Caco-2 (cell line): ENCODE measurements at regions of chr16 and their contacts with region 1.

Region 1: DNA sequence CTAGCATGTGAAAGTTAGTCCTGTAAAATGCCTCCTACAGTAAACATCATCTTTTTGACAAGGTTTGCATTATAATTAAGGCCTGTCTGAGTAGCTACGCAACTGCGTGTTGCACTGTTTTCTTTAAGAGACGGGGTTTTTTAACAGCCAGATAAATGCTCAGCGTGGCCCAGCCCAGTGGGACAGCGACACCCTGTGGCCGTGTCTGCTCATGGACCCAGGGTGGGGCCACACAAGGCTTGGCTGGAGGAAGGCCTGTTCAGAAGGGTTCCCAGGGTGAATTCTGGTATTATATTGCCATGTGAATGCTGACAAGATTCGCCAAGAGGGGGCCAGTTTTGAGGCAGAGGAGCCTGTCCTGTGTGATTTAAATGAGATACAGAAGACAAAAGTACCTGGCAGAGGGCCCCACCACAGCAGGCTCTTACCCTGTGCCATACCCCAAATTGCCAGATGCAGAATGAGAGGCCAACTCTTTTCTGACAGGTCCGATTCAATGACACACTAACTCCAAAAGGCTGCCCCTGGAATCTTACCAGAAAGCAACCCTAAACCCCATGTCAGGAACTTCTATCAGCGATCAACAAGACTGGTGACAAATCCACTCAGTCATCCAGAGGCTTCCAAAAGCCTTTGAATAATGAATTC is 65.9 kb upstream of the IRX6 start:
- DNase-seq: peak; percentile 65 to 86
- H3K4me3 ChIP-seq: no peak overlapping the region
- H3K4me3 Mint-ChIP-seq: no peak overlapping the region
- H3K27ac Mint-ChIP-seq: no peak overlapping the region
- H3K4me1 ChIP-seq: no peaks in the 10 kb centered on the region
- H3K4me1 Mint-ChIP-seq: peaks cover 6% of the 10 kb centered on the region
- H3K27me3 ChIP-seq: no peaks in the 10 kb centered on the region
- H3K27me3 Mint-ChIP-seq: no peaks in the 10 kb centered on the region
- CTCF ChIP-seq: peak; percentile 86 to 93

Region 2: DNA sequence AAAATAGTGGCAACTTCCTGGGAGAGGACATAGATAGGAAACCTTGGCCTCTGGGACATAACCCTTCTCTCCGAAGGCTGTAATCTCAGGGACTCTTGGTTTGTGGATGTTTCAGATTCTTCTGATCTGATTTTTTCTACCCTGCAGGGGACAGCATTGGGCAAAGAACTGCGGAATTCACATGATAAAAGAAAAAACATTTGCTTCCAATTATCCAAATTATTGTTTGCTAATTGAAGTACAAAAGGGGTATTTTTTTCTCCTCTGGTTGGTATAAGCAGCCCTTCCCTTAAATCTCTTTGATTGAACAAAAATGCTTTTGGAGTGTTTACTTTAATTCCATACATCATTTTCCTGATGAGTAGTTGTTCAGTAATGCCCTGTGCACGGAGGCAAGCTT is 719.8 kb before region 1 on chr16:
- CTCF ChIA-PET with region 1: no interaction called
- POLR2A ChIA-PET with region 1: no interaction called
- intact Hi-C with region 1: loop called (anchors 5 kb)
- DNase-seq: peak in 1 of 2 experiments; percentile 31
- H3K4me3 ChIP-seq: no peak overlapping the region
- H3K4me3 Mint-ChIP-seq: no peak overlapping the region
- H3K27ac Mint-ChIP-seq: no peak overlapping the region
- H3K4me1 ChIP-seq: peaks cover 23% of the 10 kb centered on the region
- H3K4me1 Mint-ChIP-seq: peaks cover 8% of the 10 kb centered on the region
- H3K27me3 ChIP-seq: no peaks in the 10 kb centered on the region
- H3K27me3 Mint-ChIP-seq: no peaks in the 10 kb centered on the region
- CTCF ChIP-seq: peak; percentile 41 to 61

Region 3: DNA sequence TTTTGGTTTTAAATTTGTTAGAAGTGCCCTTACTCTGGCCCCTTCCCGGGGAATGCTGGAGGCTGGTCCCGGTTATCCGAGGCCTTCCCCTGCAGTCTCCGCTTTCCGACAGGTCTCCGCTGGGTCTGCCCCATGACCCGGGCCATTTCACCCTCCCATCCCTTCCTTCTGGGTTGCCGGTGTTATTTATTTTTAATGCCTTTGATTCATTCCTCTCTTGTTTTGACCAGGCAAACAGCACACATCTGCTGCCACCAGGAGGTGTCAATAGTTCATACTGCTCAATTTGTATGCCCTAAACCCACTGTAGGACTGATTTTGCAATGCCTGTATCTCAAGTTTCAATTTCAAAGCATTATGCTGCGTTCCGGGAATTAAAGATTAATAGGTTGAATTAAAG is 440.6 kb before region 1 on chr16:
- CTCF ChIA-PET with region 1: no interaction called
- POLR2A ChIA-PET with region 1: no interaction called
- intact Hi-C with region 1: loop called (anchors 5 kb)
- DNase-seq: peak in 1 of 2 experiments; percentile 35
- H3K4me3 ChIP-seq: no peak overlapping the region
- H3K4me3 Mint-ChIP-seq: no peak overlapping the region
- H3K27ac Mint-ChIP-seq: peak overlapping the region; percentile 82
- H3K4me1 ChIP-seq: peaks cover 20% of the 10 kb centered on the region
- H3K4me1 Mint-ChIP-seq: peaks cover 23% of the 10 kb centered on the region
- H3K27me3 ChIP-seq: no peaks in the 10 kb centered on the region
- H3K27me3 Mint-ChIP-seq: no peaks in the 10 kb centered on the region
- CTCF ChIP-seq: peak; percentile 38 to 72

Region 4: GRCh38 chr16:54957403-54958171 is 300.5 kb before region 1 on chr16:
- CTCF ChIA-PET with region 1: interaction called, 4 read pairs
- POLR2A ChIA-PET with region 1: no interaction called
- intact Hi-C with region 1: loop called (anchors 2 kb)
- DNase-seq: peak in 1 of 2 experiments; percentile 73
- H3K4me3 ChIP-seq: no peak overlapping the region
- H3K4me3 Mint-ChIP-seq: no peak overlapping the region
- H3K27ac Mint-ChIP-seq: no peak overlapping the region
- H3K4me1 ChIP-seq: no peaks in the 10 kb centered on the region
- H3K4me1 Mint-ChIP-seq: no peaks in the 10 kb centered on the region
- H3K27me3 ChIP-seq: no peaks in the 10 kb centered on the region
- H3K27me3 Mint-ChIP-seq: no peaks in the 10 kb centered on the region
- CTCF ChIP-seq: peak; percentile 62 to 77

Region 5: GRCh38 chr16:55035029-55035428 is 223.1 kb before region 1 on chr16:
- CTCF ChIA-PET with region 1: interaction called, 8 read pairs
- POLR2A ChIA-PET with region 1: no interaction called
- intact Hi-C with region 1: loop called (anchors 1 kb)
- DNase-seq: peak; percentile 69 to 75
- H3K4me3 ChIP-seq: no peak overlapping the region
- H3K4me3 Mint-ChIP-seq: no peak overlapping the region
- H3K27ac Mint-ChIP-seq: no peak overlapping the region
- H3K4me1 ChIP-seq: 0 out of 2 replicates have a peak, but pooled peaks cover 6% of the 10 kb centered on the region
- H3K4me1 Mint-ChIP-seq: no peaks in the 10 kb centered on the region
- H3K27me3 ChIP-seq: no peaks in the 10 kb centered on the region
- H3K27me3 Mint-ChIP-seq: no peaks in the 10 kb centered on the region
- CTCF ChIP-seq: peak; percentile 62 to 72

Region 6: GRCh38 chr16:55091213-55091870 is 166.7 kb before region 1 on chr16:
- CTCF ChIA-PET with region 1: no interaction called
- POLR2A ChIA-PET with region 1: no interaction called
- intact Hi-C with region 1: no loop called
- DNase-seq: no peak
- H3K4me3 ChIP-seq: no peak overlapping the region
- H3K4me3 Mint-ChIP-seq: no peak overlapping the region
- H3K27ac Mint-ChIP-seq: no peak overlapping the region
- H3K4me1 ChIP-seq: no peaks in the 10 kb centered on the region
- H3K4me1 Mint-ChIP-seq: no peaks in the 10 kb centered on the region
- H3K27me3 ChIP-seq: no peaks in the 10 kb centered on the region
- H3K27me3 Mint-ChIP-seq: no peaks in the 10 kb centered on the region
- CTCF ChIP-seq: no peak

Region 7: DNA sequence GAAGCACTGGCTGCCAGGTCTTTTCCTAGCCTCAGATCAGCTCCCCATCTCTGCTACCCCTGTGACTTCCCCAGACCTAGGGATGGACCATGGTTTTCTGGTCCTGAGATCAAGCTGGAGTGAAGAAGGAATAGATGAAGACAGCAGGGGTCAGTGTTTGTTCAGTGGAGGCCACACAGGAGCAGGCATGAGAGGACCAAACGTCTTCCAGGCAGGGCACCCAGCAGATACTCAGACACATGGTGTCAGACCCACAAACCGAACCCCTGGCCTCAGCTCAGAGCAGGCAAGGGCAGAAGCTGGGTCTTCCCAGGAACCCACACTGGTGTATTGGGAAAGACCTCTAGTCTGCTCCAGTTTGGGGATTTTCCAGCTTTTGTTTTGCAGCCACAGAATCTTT is 137.7 kb before region 1 on chr16:
- CTCF ChIA-PET with region 1: no interaction called
- POLR2A ChIA-PET with region 1: no interaction called
- intact Hi-C with region 1: loop called (anchors 1 kb)
- DNase-seq: peak; percentile 31 to 48
- H3K4me3 ChIP-seq: no peak overlapping the region
- H3K4me3 Mint-ChIP-seq: no peak overlapping the region
- H3K27ac Mint-ChIP-seq: no peak overlapping the region
- H3K4me1 ChIP-seq: no peaks in the 10 kb centered on the region
- H3K4me1 Mint-ChIP-seq: no peaks in the 10 kb centered on the region
- H3K27me3 ChIP-seq: no peaks in the 10 kb centered on the region
- H3K27me3 Mint-ChIP-seq: no peaks in the 10 kb centered on the region
- CTCF ChIP-seq: peak in 1 of 2 experiments; percentile 55

Region 8: DNA sequence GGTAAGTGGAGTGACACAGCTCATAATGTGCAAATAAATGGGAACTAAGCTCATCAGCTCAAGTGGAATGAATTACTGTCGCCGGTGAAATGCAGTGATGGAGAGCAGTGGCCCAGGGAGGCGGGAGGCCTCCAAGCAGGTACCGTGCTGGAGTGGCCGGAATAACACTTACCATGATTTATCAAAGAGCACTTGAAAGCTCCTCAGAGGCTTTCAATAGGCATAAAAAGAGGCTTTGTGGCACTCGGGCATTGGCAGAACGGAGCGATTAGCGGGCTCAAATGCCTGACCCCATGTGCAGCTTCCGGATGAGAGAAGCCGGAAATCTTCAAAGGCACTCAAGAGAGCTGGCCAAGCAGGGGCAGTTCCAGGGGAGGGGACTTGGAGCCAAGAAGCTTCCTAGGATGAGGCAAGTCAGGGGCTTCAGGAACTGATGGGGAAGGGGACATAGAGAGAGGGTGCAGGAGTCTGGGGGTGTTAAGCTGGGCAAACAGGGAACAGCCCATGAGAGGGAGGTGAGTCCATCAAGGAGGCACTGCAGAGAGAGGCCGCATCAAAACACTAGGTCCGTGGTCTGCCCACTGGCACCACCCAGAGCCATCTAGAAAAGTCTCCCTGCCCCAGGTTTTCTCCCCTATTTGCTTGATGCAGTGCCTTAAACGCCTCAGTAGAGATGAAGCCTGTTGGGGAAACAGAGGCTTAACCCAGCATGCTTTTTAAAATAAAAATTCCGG is 78.1 kb before region 1 on chr16:
- CTCF ChIA-PET with region 1: no interaction called
- POLR2A ChIA-PET with region 1: no interaction called
- intact Hi-C with region 1: no loop called
- DNase-seq: no peak
- H3K4me3 ChIP-seq: no peak overlapping the region
- H3K4me3 Mint-ChIP-seq: no peak overlapping the region
- H3K27ac Mint-ChIP-seq: no peak overlapping the region
- H3K4me1 ChIP-seq: peaks cover 8% of the 10 kb centered on the region; the same call in 1 of the 2 replicates
- H3K4me1 Mint-ChIP-seq: peaks cover 14% of the 10 kb centered on the region
- H3K27me3 ChIP-seq: no peaks in the 10 kb centered on the region
- H3K27me3 Mint-ChIP-seq: no peaks in the 10 kb centered on the region
- CTCF ChIP-seq: no peak

Region 9: GRCh38 chr16:55294931-55295342 is 36.8 kb after region 1 on chr16:
- CTCF ChIA-PET with region 1: no interaction called
- POLR2A ChIA-PET with region 1: no interaction called
- intact Hi-C with region 1: no loop called
- DNase-seq: no peak
- H3K4me3 ChIP-seq: no peak overlapping the region
- H3K4me3 Mint-ChIP-seq: no peak overlapping the region
- H3K27ac Mint-ChIP-seq: no peak overlapping the region
- H3K4me1 ChIP-seq: no peaks in the 10 kb centered on the region
- H3K4me1 Mint-ChIP-seq: no peaks in the 10 kb centered on the region
- H3K27me3 ChIP-seq: no peaks in the 10 kb centered on the region
- H3K27me3 Mint-ChIP-seq: peaks cover 7% of the 10 kb centered on the region
- CTCF ChIP-seq: no peak

Region 10: GRCh38 chr16:55349867-55350266 is 91.8 kb after region 1 on chr16:
- CTCF ChIA-PET with region 1: no interaction called
- POLR2A ChIA-PET with region 1: no interaction called
- intact Hi-C with region 1: no loop called
- DNase-seq: no peak
- H3K4me3 ChIP-seq: no peak overlapping the region
- H3K4me3 Mint-ChIP-seq: no peak overlapping the region
- H3K27ac Mint-ChIP-seq: no peak overlapping the region
- H3K4me1 ChIP-seq: no peaks in the 10 kb centered on the region
- H3K4me1 Mint-ChIP-seq: no peaks in the 10 kb centered on the region
- H3K27me3 ChIP-seq: no peaks in the 10 kb centered on the region
- H3K27me3 Mint-ChIP-seq: no peaks in the 10 kb centered on the region
- CTCF ChIP-seq: no peak